ENCODE measurements at regions of chr4 and their contacts with region 1.

Region 1: GRCh38 chr4:40180356-40180755 is 16.5 kb upstream of the RHOH start:
- DNase-seq: no peak
- H3K4me3 Mint-ChIP-seq: no peak overlapping the region
- H3K27ac Mint-ChIP-seq: no peak overlapping the region
- H3K4me1 Mint-ChIP-seq: peaks cover 46% of the 10 kb centered on the region
- H3K27me3 Mint-ChIP-seq: no peaks in the 10 kb centered on the region

Region 2: GRCh38 chr4:40121515-40121914 is 58.8 kb before region 1 on chr4:
- CTCF ChIA-PET with region 1: no interaction called
- intact Hi-C with region 1: loop called (anchors 5 kb)
- DNase-seq: peak; percentile 51
- H3K4me3 Mint-ChIP-seq: no peak overlapping the region
- H3K27ac Mint-ChIP-seq: peak overlapping the region; percentile 61
- H3K4me1 Mint-ChIP-seq: peaks cover 46% of the 10 kb centered on the region
- H3K27me3 Mint-ChIP-seq: no peaks in the 10 kb centered on the region

Region 3: DNA sequence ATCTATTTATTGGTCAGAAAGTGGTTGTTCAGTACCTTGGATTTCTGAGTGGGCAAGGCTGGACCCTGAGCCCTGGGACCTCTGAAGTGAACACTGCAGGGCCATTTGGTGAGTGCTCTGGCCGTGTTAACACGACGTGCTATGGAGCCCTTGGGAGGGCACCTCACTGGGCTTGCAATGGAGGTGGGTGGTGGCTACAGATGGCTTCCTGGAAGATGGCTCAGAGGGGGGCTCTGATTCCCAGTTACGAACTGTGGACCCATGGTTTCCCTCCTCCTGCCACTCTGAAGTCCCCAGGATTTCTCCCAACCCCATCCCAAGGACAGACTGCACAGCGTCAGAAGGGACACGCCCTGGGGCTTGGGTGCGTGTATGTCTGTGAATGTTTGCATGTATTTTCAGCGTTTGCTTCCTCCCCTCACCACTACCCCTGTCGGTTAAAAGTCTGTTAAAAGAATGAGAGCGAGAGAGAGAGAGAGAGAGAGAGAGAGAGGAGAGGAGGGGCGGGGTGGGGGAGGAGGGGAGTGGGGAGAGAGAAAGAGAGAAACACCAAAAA is 12.7 kb after region 1 on chr4:
- CTCF ChIA-PET with region 1: interaction called, 4 read pairs
- intact Hi-C with region 1: loop called (anchors 1 kb)
- DNase-seq: peak; percentile 52
- H3K4me3 Mint-ChIP-seq: peak overlapping the region; percentile 85
- H3K27ac Mint-ChIP-seq: peak overlapping the region; percentile 98
- H3K4me1 Mint-ChIP-seq: peaks cover 67% of the 10 kb centered on the region
- H3K27me3 Mint-ChIP-seq: no peaks in the 10 kb centered on the region

Measured in activated naive CD4-positive, alpha-beta T cell treated with anti-CD3 and anti-CD28 coated beads for 36 hours (primary cell).